Activated B cell treated with CpG ODN at 0.5 μM for 24 hours (primary cell): ENCODE measurements at regions of chr6 and their contacts with region 1.

Region 1: GRCh38 chr6:43369174-43370022 is at the start of gene ZNF318:
- DNase-seq: peak; percentile 92
- ATAC-seq: peak; percentile 90
- H3K4me3 Mint-ChIP-seq: peak within 1 kb of the TSS; percentile 95
- H3K27ac Mint-ChIP-seq: peak within 1 kb of the TSS; percentile 94
- H3K4me1 Mint-ChIP-seq: peaks cover 79% of the 10 kb centered on the region
- H3K27me3 Mint-ChIP-seq: no peaks in the 10 kb centered on the region
- CTCF ChIP-seq: no peak
- total RNA-seq, gene ZNF318: 135 and 159 TPM in 2 replicates

Region 2: GRCh38 chr6:43059168-43060033 is 310.0 kb before region 1 on chr6 and contains the starts of genes KLC4 and MRPL2:
- CTCF ChIA-PET with region 1: no interaction called
- POLR2A ChIA-PET with region 1: no interaction called
- intact Hi-C with region 1: loop called (anchors 10 kb)
- DNase-seq: peak; percentile 94
- ATAC-seq: peak; percentile 97
- H3K4me3 Mint-ChIP-seq: peak within 1 kb of the TSS; percentile 95
- H3K27ac Mint-ChIP-seq: peak within 1 kb of the TSS; percentile 97
- H3K4me1 Mint-ChIP-seq: peaks cover 38% of the 10 kb centered on the region
- H3K27me3 Mint-ChIP-seq: no peaks in the 10 kb centered on the region
- CTCF ChIP-seq: no peak
- total RNA-seq, gene KLC4: 17.0 and 19.8 TPM in 2 replicates
- total RNA-seq, gene MRPL2: 43.9 and 47.8 TPM in 2 replicates

Region 3: DNA sequence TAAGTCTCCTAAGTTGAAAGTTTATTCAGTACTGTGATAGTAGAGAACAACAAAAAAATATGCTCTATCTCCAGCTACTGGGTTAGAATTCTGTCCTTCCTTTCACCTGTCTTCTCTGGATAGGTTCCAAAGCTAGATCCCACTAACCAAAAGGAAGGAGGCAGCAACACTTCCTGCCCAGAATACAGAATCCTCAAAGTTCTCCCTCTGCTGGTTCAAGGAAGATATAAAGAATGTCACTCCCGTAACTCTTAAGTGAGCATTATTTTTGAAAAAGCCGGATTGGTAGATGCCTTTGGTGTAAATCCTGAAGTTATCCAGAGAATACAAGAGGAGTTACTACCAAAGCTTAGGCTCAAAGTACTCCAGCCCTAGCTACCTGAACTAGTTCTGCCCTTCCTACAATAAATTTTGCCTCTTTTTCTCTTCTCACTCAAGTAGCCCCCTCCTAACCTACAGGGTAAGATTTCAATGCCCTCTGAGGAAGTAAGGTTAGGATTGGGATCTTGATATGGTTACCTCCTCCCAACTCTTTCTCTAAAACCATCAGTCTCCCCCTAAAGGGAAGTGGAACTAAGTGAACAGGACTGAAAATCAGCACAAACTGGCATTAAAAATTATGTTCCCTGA is 34.8 kb before region 1 on chr6:
- CTCF ChIA-PET with region 1: interaction called, 4 read pairs
- POLR2A ChIA-PET with region 1: interaction called, 39 read pairs
- intact Hi-C with region 1: no loop called
- DNase-seq: no peak
- ATAC-seq: no peak
- H3K4me3 Mint-ChIP-seq: no peak overlapping the region
- H3K27ac Mint-ChIP-seq: peak overlapping the region; percentile 15
- H3K4me1 Mint-ChIP-seq: peaks cover 56% of the 10 kb centered on the region
- H3K27me3 Mint-ChIP-seq: no peaks in the 10 kb centered on the region
- CTCF ChIP-seq: no peak

Region 4: GRCh38 chr6:43391440-43392031 is 22.1 kb after region 1 on chr6:
- CTCF ChIA-PET with region 1: interaction called, 75 read pairs
- POLR2A ChIA-PET with region 1: interaction called, 384 read pairs
- intact Hi-C with region 1: no loop called
- DNase-seq: no peak
- ATAC-seq: no peak
- H3K4me3 Mint-ChIP-seq: peak overlapping the region; percentile 32
- H3K27ac Mint-ChIP-seq: no peak overlapping the region
- H3K4me1 Mint-ChIP-seq: peaks cover 49% of the 10 kb centered on the region
- H3K27me3 Mint-ChIP-seq: peaks cover 25% of the 10 kb centered on the region
- CTCF ChIP-seq: no peak

Region 5: GRCh38 chr6:43427406-43428111 is 58.2 kb after region 1 on chr6 and contains the start of gene ABCC10:
- CTCF ChIA-PET with region 1: no interaction called
- POLR2A ChIA-PET with region 1: interaction called, 26 read pairs
- intact Hi-C with region 1: loop called (anchors 1 kb)
- DNase-seq: peak; percentile 90
- ATAC-seq: peak; percentile 93
- H3K4me3 Mint-ChIP-seq: peak within 1 kb of the TSS; percentile 95
- H3K27ac Mint-ChIP-seq: peak within 1 kb of the TSS; percentile 95
- H3K4me1 Mint-ChIP-seq: peaks cover 20% of the 10 kb centered on the region
- H3K27me3 Mint-ChIP-seq: no peaks in the 10 kb centered on the region
- CTCF ChIP-seq: no peak
- total RNA-seq, gene ABCC10: 59.5 and 74.6 TPM in 2 replicates

Region 6: DNA sequence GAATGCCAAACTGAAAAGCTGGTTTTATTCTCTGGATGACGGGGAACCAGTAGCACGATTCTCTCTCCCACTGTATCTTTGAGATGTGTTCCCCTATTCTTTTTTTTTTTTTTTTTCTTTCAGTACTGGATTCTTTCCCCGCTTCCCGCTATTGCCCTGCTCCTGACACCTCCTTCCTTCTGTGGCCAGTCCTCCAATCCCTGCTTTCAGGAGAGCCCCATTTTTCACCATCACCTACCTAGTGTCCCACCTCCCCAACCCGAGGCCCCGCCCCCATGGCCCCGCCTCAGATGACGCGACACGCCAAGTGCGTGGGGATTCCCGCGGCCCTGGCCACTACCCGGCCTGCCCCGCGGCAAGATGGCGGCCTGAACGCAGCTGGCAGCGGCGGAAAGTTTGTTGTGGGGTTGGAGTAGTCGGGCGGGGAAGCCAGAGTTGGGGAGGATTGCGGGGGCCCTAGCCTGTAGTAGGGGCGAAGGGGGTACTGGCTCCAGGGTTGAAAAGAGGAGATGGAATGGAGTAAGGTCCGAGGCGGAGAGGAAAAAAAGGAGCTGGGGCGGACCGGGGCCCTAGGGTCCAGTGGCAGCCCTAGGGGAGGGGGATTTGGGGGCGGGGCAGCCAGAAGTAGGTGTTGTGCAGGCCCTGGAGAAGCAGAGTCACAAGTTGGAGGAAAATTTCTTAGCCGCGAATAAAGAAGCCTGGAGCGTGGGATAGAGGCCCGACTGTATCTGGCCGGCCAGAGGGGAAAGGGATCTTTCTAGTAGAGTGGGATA is 108.0 kb after region 1 on chr6 and contains the start of gene TJAP1:
- CTCF ChIA-PET with region 1: no interaction called
- POLR2A ChIA-PET with region 1: no interaction called
- intact Hi-C with region 1: loop called (anchors 1 kb)
- DNase-seq: peak; percentile 98
- ATAC-seq: peak; percentile 100
- H3K4me3 Mint-ChIP-seq: peak within 1 kb of the TSS; percentile 96
- H3K27ac Mint-ChIP-seq: peak within 1 kb of the TSS; percentile 94
- H3K4me1 Mint-ChIP-seq: peaks cover 41% of the 10 kb centered on the region
- H3K27me3 Mint-ChIP-seq: no peaks in the 10 kb centered on the region
- CTCF ChIP-seq: no peak
- total RNA-seq, gene TJAP1: 36.0 and 45.3 TPM in 2 replicates